ENCODE measurements at regions of chr5 and their contacts with region 1.

Region 1: DNA sequence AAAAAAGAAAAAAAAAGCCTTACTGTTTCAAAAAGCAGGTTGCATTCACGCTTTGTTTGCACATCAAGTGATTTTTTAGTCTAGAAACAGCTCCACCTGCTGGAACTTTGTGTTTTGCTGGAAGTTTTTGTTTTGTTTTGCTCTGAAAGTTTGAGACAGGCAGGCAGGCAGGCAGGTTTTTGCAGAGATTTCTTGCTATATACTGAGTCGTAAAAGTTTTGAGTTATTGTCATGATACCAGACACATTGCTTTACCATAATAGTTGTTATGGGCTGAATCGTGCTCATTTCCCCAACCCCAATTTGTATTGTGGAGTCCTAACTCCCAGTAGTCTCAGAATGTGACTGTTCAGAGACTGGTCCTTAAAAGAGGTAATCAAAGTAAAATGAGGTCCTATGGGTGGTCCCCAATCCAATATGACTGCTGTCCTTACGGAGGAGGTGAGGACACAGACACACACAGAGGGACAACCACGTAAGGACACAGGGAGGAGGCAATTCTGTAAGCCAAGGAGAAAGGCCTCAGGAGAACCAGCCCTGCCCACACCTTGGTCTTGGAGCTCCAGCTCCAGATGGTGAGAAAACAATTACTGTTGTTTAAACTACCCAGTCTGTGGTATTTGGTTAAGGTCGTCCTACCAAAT is 20.9 kb downstream of the OR2Y1 start:
- DNase-seq: peak; percentile 56
- H3K4me3 Mint-ChIP-seq: no peak overlapping the region
- H3K27ac Mint-ChIP-seq: no peak overlapping the region
- H3K4me1 Mint-ChIP-seq: no peaks in the 10 kb centered on the region
- H3K27me3 Mint-ChIP-seq: peaks cover 70% of the 10 kb centered on the region
- CTCF ChIP-seq: peak; percentile 58

Region 2: DNA sequence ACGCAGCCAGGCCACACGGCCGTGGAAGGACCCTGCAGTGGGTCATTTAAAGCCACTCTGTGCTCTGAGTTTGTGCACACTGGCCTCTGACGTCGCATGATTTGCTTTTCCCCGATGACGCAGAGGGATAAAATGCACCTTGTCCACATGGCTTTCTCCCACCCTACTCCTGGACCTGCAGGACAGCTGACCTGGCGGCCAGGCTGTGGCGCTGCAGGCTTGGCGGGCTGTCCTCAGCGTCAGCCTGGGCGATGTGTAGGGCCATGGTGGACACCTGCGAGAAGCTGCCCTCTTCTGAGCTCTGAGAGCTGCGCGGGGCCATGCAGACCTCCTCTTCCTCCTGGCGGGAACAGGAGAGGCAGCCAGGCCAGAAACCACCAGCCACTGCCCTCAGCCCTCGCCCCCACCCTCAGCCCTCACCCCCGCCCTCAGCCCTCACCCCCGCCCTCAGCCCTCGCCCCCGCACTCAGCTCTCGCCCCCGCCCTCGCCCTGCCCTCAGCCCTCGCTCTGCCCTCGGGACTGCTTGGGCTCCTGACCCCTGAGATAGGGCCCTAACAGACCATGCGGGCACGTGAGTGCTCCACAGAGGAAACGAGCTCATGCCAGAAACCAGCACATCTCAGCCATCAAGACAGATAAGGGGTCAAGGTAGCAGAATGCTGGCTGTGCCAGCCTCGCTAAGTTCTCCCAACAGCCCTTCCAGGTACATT is 107.6 kb before region 1 on chr5:
- CTCF ChIA-PET with region 1: interaction called, 22 read pairs
- intact Hi-C with region 1: loop called (anchors 5 kb)
- DNase-seq: peak; percentile 84
- H3K4me3 Mint-ChIP-seq: no peak overlapping the region
- H3K27ac Mint-ChIP-seq: no peak overlapping the region
- H3K4me1 Mint-ChIP-seq: peaks cover 2% of the 10 kb centered on the region
- H3K27me3 Mint-ChIP-seq: peaks cover 58% of the 10 kb centered on the region
- CTCF ChIP-seq: peak; percentile 62

Measured in Calu3 (cell line).